Mammary epithelial cell (primary cell): ENCODE measurements at regions of chr22 and their contacts with region 1.

Region 1: GRCh38 chr22:44691796-44692661 is 10.0 kb upstream of the PRR5 start:
- DNase-seq: no peak
- H3K4me3 ChIP-seq: no peak overlapping the region
- H3K27ac ChIP-seq: no peak overlapping the region
- H3K4me1 ChIP-seq: peaks cover 12% of the 10 kb centered on the region
- H3K27me3 ChIP-seq: no peaks in the 10 kb centered on the region
- CTCF ChIP-seq: no peak

Region 2: DNA sequence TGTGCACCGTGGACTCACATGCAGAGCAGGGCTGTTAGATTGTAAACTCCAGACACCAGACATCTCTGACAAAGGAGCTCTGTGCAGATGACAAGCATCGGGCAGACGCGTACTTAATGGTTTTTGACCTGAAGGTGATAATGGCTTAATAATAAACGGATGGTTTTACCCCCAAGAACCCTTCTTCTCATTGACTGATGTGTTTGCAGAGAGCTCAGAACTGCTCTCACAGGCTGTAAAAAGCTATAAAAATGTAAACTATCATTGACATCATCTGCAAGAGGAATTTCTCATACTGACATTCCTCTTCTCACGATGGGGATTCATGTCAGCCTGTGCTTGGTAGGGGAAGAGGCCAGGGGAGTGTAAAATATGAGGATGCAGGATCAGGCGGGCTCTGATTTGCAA is 51.8 kb after region 1 on chr22:
- CTCF ChIA-PET with region 1: no interaction called
- dilution Hi-C with region 1: loop called (anchors 5 kb)
- in situ Hi-C with region 1: loop called in 1 of 2 experiments (anchors 5 kb)
- intact Hi-C with region 1: no loop called
- DNase-seq: no peak
- H3K4me3 ChIP-seq: no peak overlapping the region
- H3K27ac ChIP-seq: no peak overlapping the region
- H3K4me1 ChIP-seq: no peaks in the 10 kb centered on the region
- H3K27me3 ChIP-seq: no peaks in the 10 kb centered on the region
- CTCF ChIP-seq: no peak

Region 3: DNA sequence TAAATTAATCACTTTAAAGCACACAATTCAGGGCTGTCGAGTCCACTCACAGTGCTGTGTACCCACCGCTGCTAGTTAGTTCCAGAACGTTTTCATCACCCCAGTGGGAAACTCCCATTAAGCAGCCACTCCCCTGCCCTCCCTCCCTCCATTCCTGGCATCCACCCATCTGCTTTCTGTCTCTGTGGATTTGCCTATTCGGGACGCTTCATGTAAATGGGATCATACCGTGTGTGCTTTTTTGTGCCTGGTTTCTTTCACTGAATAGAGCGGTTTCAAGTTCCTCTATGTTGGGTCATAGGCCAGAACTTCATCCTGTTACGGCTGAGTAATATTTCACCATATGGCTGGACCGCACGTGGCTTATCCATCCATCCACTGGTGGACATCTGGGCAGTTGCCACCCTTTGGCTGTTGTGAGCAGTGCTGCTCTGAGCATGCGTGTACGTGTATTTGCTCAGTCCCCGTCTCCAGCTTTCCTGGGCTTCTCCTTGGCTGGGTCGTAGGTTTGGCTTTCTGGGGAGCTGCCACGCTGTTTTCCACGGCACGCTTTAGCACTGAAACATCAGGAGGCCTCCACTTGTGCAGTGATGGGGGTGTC is 90.4 kb after region 1 on chr22:
- CTCF ChIA-PET with region 1: no interaction called
- dilution Hi-C with region 1: loop called (anchors 5 kb)
- in situ Hi-C with region 1: no loop called
- intact Hi-C with region 1: no loop called
- DNase-seq: no peak
- H3K4me3 ChIP-seq: no peak overlapping the region
- H3K27ac ChIP-seq: no peak overlapping the region
- H3K4me1 ChIP-seq: peaks cover 8% of the 10 kb centered on the region
- H3K27me3 ChIP-seq: no peaks in the 10 kb centered on the region
- CTCF ChIP-seq: no peak

Region 4: DNA sequence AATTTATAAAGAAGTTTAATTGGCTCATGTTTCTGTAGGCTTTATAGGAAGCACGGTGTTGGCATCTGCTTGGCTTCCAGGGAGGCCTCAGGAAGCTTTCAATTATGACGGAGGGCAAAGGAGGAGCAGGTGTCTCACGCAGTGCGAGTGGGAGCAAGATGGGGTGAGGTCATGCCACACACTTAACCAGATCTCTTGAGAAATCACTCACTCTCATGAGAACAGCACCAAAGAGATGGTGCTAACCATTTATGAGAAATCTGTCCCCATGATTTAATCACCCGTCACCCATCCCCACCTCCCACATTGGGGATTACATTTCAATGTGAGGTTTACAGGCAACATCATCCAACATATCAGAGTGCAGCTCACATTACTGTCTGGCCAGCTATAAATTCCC is 163.8 kb after region 1 on chr22:
- CTCF ChIA-PET with region 1: no interaction called
- dilution Hi-C with region 1: no loop called
- in situ Hi-C with region 1: no loop called
- intact Hi-C with region 1: no loop called
- DNase-seq: no peak
- H3K4me3 ChIP-seq: no peak overlapping the region
- H3K27ac ChIP-seq: no peak overlapping the region
- H3K4me1 ChIP-seq: peaks cover 20% of the 10 kb centered on the region
- H3K27me3 ChIP-seq: no peaks in the 10 kb centered on the region
- CTCF ChIP-seq: no peak